Activated CD4-positive, alpha-beta memory T cell treated with anti-CD3 and anti-CD28 coated beads for 36 hours (primary cell): ENCODE measurements at regions of chr2 and their contacts with region 1.

Region 1: DNA sequence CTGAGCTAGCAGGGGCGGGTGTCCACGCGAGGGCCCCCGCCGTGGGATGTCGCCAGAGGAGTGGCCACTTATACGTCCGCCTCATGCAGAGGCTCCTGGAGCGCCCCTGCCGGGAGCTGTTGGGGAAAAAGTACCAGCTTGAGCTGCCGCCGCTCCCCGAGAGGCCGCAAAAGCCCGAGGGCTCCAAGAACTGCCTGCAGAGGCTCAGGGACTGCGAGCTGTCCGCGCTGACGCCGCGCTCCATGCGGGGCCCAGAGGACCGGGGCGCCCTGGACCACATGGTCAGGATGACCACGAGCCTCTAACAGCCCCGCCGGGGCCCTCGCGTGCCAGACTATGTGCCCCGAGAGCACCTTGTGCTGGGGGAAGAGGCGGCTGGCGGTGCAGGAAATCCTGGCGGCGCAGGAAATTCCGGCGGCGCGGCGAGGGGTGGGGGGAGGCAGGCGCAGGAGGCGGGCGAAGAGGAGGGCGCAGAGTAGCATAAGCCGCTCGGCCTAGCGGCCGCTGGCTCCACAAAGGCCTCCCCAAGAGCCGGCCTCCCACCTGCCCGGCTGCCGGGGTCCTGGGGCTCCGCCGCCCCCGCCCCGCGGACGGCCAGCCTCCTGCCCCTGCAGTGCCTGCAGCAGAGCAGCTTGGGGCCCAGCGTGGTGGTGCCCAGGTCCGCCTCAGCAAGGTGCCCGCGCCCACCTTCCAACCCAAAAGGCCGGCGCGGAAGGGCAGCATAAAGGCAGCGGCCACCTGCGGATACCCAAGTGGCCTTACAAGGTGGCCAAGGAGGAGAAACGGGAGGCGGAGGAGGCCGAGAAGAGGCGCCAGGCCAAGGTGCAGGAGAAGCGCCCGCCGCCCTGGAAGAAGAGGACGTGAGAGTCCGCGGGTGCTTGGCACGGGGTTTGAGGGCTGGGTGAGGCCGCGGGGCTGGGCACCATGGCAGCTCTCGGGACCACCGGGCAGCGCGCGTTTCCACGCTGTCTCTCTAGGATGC is 42.1 kb upstream of the TRIM43B start:
- DNase-seq: peak; percentile 72
- H3K4me3 Mint-ChIP-seq: peak overlapping the region; percentile 85
- H3K27ac Mint-ChIP-seq: peak overlapping the region; percentile 82
- H3K4me1 Mint-ChIP-seq: peaks cover 31% of the 10 kb centered on the region
- H3K27me3 Mint-ChIP-seq: no peaks in the 10 kb centered on the region

Region 2: DNA sequence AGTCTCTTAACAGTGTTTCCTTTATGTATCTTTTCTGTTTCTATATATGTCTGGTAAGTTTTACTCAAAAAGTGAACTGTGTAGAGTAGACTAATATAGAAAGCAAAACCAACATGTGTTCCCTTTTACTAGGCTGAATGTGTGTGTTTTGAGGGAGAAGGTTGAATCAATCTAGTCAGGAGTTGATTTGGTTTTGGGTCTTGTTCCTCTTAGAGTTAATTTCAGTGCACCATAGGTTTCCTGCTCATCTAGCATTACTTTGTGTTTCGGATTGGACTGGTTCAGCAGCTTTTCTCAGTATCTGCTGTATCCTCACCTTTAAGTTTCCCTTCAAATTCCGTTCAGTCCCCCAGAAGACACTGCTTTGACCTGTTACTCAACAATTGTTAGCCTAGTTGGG is 13.2 kb after region 1 on chr2:
- CTCF ChIA-PET with region 1: no interaction called
- POLR2A ChIA-PET with region 1: interaction called, 4 read pairs
- intact Hi-C with region 1: loop called (anchors 1 kb)
- DNase-seq: no peak
- H3K4me3 Mint-ChIP-seq: no peak overlapping the region
- H3K27ac Mint-ChIP-seq: peak overlapping the region; percentile 34
- H3K4me1 Mint-ChIP-seq: peaks cover 17% of the 10 kb centered on the region
- H3K27me3 Mint-ChIP-seq: peaks cover 9% of the 10 kb centered on the region

Region 3: DNA sequence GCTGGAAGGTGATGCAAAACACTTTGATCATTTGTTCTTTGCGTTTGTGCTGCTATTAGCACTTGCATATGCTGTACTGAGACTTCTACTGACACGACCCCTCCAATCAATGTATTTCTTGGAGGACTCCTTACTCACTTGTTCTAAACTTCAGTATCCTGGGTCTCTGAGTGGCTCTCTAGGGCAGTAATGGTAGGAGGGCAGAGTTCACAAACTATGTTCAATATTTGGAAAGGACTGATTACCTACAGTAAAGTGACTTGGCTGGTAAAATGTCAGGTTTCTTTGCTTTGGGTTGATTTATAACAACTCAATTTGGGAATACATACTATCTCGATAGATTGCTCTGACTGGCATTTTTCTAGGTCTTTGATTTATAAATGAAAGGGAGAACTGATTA is 158.9 kb after region 1 on chr2:
- CTCF ChIA-PET with region 1: no interaction called
- POLR2A ChIA-PET with region 1: no interaction called
- intact Hi-C with region 1: no loop called
- DNase-seq: no peak
- H3K4me3 Mint-ChIP-seq: no peak overlapping the region
- H3K27ac Mint-ChIP-seq: no peak overlapping the region
- H3K4me1 Mint-ChIP-seq: peaks cover 13% of the 10 kb centered on the region
- H3K27me3 Mint-ChIP-seq: peaks cover 24% of the 10 kb centered on the region